Activated CD8-positive, alpha-beta T cell treated with anti-CD3 and anti-CD28 coated beads for 36 hours (primary cell): ENCODE measurements at regions of chr11 and their contacts with region 1.

Region 1: GRCh38 chr11:75142714-75143419 is 8.0 kb upstream of the SLCO2B1 start:
- DNase-seq: peak; percentile 90
- ATAC-seq: peak; percentile 94
- H3K4me3 Mint-ChIP-seq: no peak overlapping the region
- H3K27ac Mint-ChIP-seq: peak overlapping the region; percentile 81
- H3K4me1 Mint-ChIP-seq: peaks cover 28% of the 10 kb centered on the region
- H3K27me3 Mint-ChIP-seq: no peaks in the 10 kb centered on the region
- CTCF ChIP-seq: peak; percentile 10

Region 2: GRCh38 chr11:74929431-74930363 is 213.2 kb before region 1 on chr11:
- CTCF ChIA-PET with region 1: interaction called, 26 read pairs
- POLR2A ChIA-PET with region 1: no interaction called
- intact Hi-C with region 1: loop called (anchors 10 kb)
- DNase-seq: peak; percentile 87
- ATAC-seq: peak; percentile 57
- H3K4me3 Mint-ChIP-seq: no peak overlapping the region
- H3K27ac Mint-ChIP-seq: no peak overlapping the region
- H3K4me1 Mint-ChIP-seq: peaks cover 29% of the 10 kb centered on the region
- H3K27me3 Mint-ChIP-seq: no peaks in the 10 kb centered on the region
- CTCF ChIP-seq: peak; percentile 97

Region 3: DNA sequence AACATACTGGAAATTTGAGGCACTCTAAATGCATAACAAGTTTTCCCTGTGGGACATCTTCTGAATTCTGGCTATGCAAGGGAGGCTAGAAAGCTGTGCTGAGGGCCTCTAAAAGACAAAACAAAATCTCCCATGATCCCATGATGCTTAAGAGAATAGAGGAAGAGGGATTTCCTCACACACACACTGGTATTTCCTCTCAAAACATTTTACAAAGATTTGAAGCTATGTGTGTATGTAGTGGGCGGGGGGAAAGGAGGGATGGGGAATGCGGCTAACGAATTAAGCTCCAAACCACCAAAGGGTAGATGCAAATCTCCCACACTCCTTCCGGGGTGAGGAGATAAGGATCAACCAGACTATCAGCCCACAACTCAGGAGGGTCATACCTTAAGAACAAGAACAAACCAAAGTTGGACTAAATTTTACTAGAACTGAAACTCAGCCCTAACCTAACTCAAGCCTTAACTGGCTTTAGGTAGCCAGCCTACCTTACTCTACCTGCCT is 52.1 kb before region 1 on chr11:
- CTCF ChIA-PET with region 1: no interaction called
- POLR2A ChIA-PET with region 1: no interaction called
- intact Hi-C with region 1: no loop called
- DNase-seq: no peak
- ATAC-seq: no peak
- H3K4me3 Mint-ChIP-seq: no peak overlapping the region
- H3K27ac Mint-ChIP-seq: no peak overlapping the region
- H3K4me1 Mint-ChIP-seq: no peaks in the 10 kb centered on the region
- H3K27me3 Mint-ChIP-seq: peaks cover 37% of the 10 kb centered on the region
- CTCF ChIP-seq: no peak

Region 4: GRCh38 chr11:75126564-75126963 is 16.3 kb before region 1 on chr11:
- CTCF ChIA-PET with region 1: interaction called, 15 read pairs
- POLR2A ChIA-PET with region 1: interaction called, 3 read pairs
- intact Hi-C with region 1: no loop called
- DNase-seq: no peak
- ATAC-seq: no peak
- H3K4me3 Mint-ChIP-seq: no peak overlapping the region
- H3K27ac Mint-ChIP-seq: no peak overlapping the region
- H3K4me1 Mint-ChIP-seq: no peaks in the 10 kb centered on the region
- H3K27me3 Mint-ChIP-seq: peaks cover 13% of the 10 kb centered on the region
- CTCF ChIP-seq: no peak

Region 5: DNA sequence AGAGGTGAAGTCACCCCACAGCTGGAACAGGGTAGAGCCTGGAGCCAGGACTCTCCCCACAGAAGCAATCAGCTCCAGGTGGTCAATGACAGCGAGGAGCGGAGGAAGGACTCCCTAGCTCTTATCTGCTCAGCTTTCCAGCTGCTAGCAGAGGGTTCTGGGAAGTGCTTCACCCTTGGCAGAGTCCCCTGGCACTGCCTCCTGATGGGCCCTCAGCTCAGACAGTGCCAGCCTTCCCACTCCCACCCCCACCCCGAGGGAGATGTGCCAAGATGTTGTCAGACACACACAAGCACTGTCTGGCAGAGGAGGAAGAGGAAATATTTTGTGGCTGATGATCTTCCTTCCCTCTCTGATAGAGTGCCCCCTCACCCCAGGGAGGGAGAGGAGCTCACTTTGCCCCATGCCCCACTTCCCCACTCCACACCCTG is 52.3 kb after region 1 on chr11:
- CTCF ChIA-PET with region 1: interaction called, 557 read pairs
- POLR2A ChIA-PET with region 1: no interaction called
- intact Hi-C with region 1: no loop called
- DNase-seq: no peak
- ATAC-seq: no peak
- H3K4me3 Mint-ChIP-seq: no peak overlapping the region
- H3K27ac Mint-ChIP-seq: no peak overlapping the region
- H3K4me1 Mint-ChIP-seq: no peaks in the 10 kb centered on the region
- H3K27me3 Mint-ChIP-seq: no peaks in the 10 kb centered on the region
- CTCF ChIP-seq: no peak

Region 6: DNA sequence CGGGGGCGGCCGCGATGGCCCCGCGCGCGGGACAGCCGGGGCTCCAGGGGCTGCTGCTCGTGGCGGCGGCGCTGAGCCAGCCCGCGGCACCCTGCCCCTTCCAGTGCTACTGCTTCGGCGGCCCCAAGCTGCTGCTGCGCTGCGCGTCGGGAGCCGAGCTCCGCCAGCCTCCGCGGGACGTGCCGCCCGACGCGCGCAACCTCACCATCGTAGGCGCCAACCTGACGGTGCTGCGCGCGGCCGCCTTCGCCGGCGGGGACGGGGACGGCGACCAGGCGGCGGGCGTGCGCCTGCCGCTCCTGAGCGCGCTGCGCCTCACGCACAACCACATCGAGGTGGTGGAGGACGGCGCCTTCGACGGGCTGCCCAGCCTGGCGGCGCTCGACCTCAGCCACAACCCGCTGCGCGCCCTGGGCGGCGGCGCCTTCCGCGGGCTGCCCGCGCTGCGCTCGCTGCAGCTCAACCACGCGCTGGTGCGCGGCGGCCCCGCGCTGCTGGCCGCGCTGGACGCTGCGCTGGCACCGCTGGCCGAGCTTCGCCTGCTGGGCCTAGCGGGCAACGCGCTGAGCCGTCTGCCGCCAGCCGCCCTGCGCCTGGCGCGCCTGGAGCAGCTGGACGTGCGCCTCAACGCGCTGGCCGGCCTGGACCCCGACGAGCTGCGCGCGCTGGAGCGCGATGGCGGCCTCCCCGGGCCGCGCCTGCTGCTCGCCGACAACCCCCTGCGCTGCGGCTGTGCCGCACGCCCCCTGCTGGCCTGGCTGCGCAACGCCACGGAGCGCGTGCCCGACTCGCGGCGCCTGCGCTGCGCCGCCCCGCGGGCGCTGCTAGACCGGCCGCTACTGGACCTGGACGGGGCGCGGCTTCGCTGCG is 98.4 kb after region 1 on chr11:
- CTCF ChIA-PET with region 1: interaction called, 663 read pairs
- POLR2A ChIA-PET with region 1: interaction called, 4 read pairs
- intact Hi-C with region 1: no loop called
- DNase-seq: peak; percentile 83
- ATAC-seq: peak; percentile 95
- H3K4me3 Mint-ChIP-seq: peak overlapping the region; percentile 62
- H3K27ac Mint-ChIP-seq: no peak overlapping the region
- H3K4me1 Mint-ChIP-seq: peaks cover 10% of the 10 kb centered on the region
- H3K27me3 Mint-ChIP-seq: peaks cover 29% of the 10 kb centered on the region
- CTCF ChIP-seq: peak; percentile 92

Region 7: GRCh38 chr11:75254326-75254725 is 111.5 kb after region 1 on chr11:
- CTCF ChIA-PET with region 1: interaction called, 663 read pairs
- POLR2A ChIA-PET with region 1: no interaction called
- intact Hi-C with region 1: loop called (anchors 2 kb)
- DNase-seq: no peak
- ATAC-seq: no peak
- H3K4me3 Mint-ChIP-seq: no peak overlapping the region
- H3K27ac Mint-ChIP-seq: no peak overlapping the region
- H3K4me1 Mint-ChIP-seq: no peaks in the 10 kb centered on the region
- H3K27me3 Mint-ChIP-seq: no peaks in the 10 kb centered on the region
- CTCF ChIP-seq: no peak